ENCODE measurements at regions of chr6 and their contacts with region 1.

Region 1: GRCh38 chr6:117536317-117536716 is 53.8 kb downstream of the DCBLD1 start:
- DNase-seq: peak; percentile 69 to 71
- H3K4me3 ChIP-seq: no peak overlapping the region
- H3K4me3 Mint-ChIP-seq: peak overlapping the region; percentile 56
- H3K27ac Mint-ChIP-seq: peak overlapping the region; percentile 96
- H3K4me1 ChIP-seq: peaks cover 38% of the 10 kb centered on the region
- H3K4me1 Mint-ChIP-seq: peaks cover 33% of the 10 kb centered on the region
- H3K27me3 ChIP-seq: no peaks in the 10 kb centered on the region
- H3K27me3 Mint-ChIP-seq: no peaks in the 10 kb centered on the region
- CTCF ChIP-seq: no peak

Region 2: DNA sequence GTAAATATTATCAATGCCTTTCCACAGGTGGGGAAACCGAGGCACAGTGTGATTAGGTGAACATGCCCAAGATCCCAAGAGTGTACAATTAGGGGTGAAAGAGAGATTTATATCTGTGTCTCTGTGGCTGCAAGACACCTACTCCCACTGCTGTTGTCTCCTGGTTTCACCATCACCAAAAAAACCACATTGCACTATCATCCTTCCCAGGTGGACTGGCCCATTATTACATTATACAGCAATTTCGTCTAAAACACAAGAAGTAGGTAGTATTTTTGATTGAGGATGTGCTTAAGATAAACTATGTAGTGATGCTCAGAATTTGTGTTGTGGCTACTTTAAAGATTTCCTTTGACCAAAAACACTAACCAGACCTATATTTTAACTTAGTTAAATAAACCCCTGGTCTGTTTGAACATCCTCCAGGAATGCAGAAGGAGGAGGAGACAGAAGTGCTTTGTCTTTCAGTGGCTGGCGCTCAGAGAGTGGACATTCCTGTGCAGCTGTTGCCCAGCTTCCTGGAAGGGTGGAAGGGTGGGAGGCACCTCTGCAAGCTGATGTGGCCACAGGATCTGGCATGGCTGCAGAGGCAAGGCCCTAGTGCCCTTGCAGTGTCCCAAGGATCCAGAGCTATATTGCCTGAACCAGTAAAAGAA is 30.0 kb before region 1 on chr6:
- CTCF ChIA-PET with region 1: no interaction called
- POLR2A ChIA-PET with region 1: no interaction called
- intact Hi-C with region 1: loop called (anchors 1 kb)
- DNase-seq: peak; percentile 55 to 67
- H3K4me3 ChIP-seq: no peak overlapping the region
- H3K4me3 Mint-ChIP-seq: peak overlapping the region; percentile 34
- H3K27ac Mint-ChIP-seq: peak overlapping the region; percentile 76
- H3K4me1 ChIP-seq: peaks cover 90% of the 10 kb centered on the region
- H3K4me1 Mint-ChIP-seq: peaks cover 73% of the 10 kb centered on the region
- H3K27me3 ChIP-seq: no peaks in the 10 kb centered on the region
- H3K27me3 Mint-ChIP-seq: no peaks in the 10 kb centered on the region
- CTCF ChIP-seq: no peak

Region 3: DNA sequence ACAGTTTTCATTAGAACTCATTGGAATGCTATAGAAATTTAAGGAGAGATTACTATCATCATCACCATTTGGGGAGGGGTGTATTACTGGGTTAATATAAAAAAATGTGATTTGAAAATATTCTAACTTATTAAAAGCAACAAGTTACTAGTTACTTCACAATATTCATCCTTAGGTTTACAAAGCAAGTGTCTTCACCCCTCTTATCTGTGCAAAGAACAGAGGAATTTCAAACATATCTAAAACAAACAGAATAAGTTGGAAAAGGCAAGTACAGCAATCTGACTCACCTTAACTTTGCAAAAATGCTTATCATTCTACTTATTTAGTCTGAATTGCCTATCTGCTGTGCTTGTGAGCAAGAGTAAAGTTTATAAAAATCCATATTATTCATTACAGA is 21.0 kb before region 1 on chr6:
- CTCF ChIA-PET with region 1: no interaction called
- POLR2A ChIA-PET with region 1: no interaction called
- intact Hi-C with region 1: loop called (anchors 1 kb)
- DNase-seq: peak in 1 of 2 experiments; percentile 42
- H3K4me3 ChIP-seq: no peak overlapping the region
- H3K4me3 Mint-ChIP-seq: peak overlapping the region; percentile 5
- H3K27ac Mint-ChIP-seq: peak overlapping the region; percentile 94
- H3K4me1 ChIP-seq: peaks cover 88% of the 10 kb centered on the region
- H3K4me1 Mint-ChIP-seq: peaks cover 60% of the 10 kb centered on the region
- H3K27me3 ChIP-seq: no peaks in the 10 kb centered on the region
- H3K27me3 Mint-ChIP-seq: no peaks in the 10 kb centered on the region
- CTCF ChIP-seq: no peak

Region 4: GRCh38 chr6:117548797-117549301 is 12.5 kb after region 1 on chr6:
- CTCF ChIA-PET with region 1: no interaction called
- POLR2A ChIA-PET with region 1: no interaction called
- intact Hi-C with region 1: loop called (anchors 1 kb)
- DNase-seq: no peak
- H3K4me3 ChIP-seq: no peak overlapping the region
- H3K4me3 Mint-ChIP-seq: no peak overlapping the region
- H3K27ac Mint-ChIP-seq: peak overlapping the region; percentile 40
- H3K4me1 ChIP-seq: peaks cover 61% of the 10 kb centered on the region
- H3K4me1 Mint-ChIP-seq: peaks cover 34% of the 10 kb centered on the region
- H3K27me3 ChIP-seq: no peaks in the 10 kb centered on the region
- H3K27me3 Mint-ChIP-seq: no peaks in the 10 kb centered on the region
- CTCF ChIP-seq: no peak